Activated T-helper 2 cell treated with anti-CD3 and anti-CD28 coated beads, Interferon-gamma antibody, Interleukin-2, Interleukin-4, amounts not matched to agents 10 μg/mL and 5 μg/mL and 100 μg/mL, durations not matched to agents 14 hours and 24 hours and 36 hours (primary cell): ENCODE measurements at regions of chr6 and their contacts with region 1.

Region 1: DNA sequence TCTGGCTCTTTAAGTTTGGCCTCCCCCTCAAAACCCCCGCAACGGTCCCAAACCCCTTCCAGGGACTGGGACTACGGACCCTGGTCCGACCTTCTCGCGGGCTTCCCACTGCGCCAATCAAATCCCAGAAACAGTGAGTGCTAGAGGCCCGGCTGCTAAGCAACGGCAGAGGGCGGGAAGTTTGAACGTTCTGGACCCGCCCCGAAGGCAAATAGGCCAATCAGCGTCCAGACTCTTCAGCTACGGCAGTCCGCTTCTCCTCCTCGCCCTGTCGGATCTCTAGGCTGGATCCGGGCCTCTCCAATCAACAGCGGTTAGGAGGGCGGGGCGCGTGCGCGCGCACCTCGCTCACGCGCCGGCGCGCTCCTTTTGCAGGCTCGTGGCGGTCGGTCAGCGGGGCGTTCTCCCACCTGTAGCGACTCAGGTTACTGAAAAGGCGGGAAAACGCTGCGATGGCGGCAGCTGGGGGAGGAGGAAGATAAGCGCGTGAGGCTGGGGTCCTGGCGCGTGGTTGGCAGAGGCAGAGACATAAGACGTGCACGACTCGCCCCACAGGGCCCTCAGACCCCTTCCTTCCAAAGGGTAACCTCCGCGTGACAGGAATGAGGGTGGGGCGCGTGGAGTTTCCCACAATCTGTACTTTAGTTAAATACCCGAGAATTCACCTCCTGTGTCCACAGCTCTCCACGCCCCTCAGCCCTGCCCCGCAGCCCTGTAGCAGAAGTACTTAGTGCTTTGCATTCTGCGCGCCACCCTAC is at the start of gene MSH5:
- DNase-seq: peak; percentile 97
- H3K4me3 Mint-ChIP-seq: peak within 1 kb of the TSS; percentile 95
- H3K27ac Mint-ChIP-seq: peak within 1 kb of the TSS; percentile 90
- H3K4me1 Mint-ChIP-seq: peaks cover 49% of the 10 kb centered on the region
- H3K27me3 Mint-ChIP-seq: no peaks in the 10 kb centered on the region
- total RNA-seq, gene MSH5: 82.8 and 93.3 TPM in 2 replicates

Region 2: GRCh38 chr6:31546962-31547726 is 192.7 kb before region 1 on chr6 and contains the start of gene NFKBIL1:
- intact Hi-C with region 1: loop called (anchors 1 kb)
- DNase-seq: peak; percentile 90
- H3K4me3 Mint-ChIP-seq: peak within 1 kb of the TSS; percentile 84
- H3K27ac Mint-ChIP-seq: peak within 1 kb of the TSS; percentile 78
- H3K4me1 Mint-ChIP-seq: peaks cover 28% of the 10 kb centered on the region
- H3K27me3 Mint-ChIP-seq: no peaks in the 10 kb centered on the region
- total RNA-seq, gene NFKBIL1: 15.7 and 17.6 TPM in 2 replicates

Region 3: GRCh38 chr6:31665501-31666336 is 74.1 kb before region 1 on chr6 and contains the start of gene CSNK2B:
- intact Hi-C with region 1: loop called (anchors 1 kb)
- DNase-seq: peak; percentile 98
- H3K4me3 Mint-ChIP-seq: peak within 1 kb of the TSS; percentile 96
- H3K27ac Mint-ChIP-seq: peak within 1 kb of the TSS; percentile 94
- H3K4me1 Mint-ChIP-seq: peaks cover 43% of the 10 kb centered on the region
- H3K27me3 Mint-ChIP-seq: no peaks in the 10 kb centered on the region
- total RNA-seq, gene CSNK2B: 266 and 279 TPM in 2 replicates

Region 4: GRCh38 chr6:31776989-31777666 is 37.3 kb after region 1 on chr6 and contains the start of gene VWA7:
- intact Hi-C with region 1: loop called (anchors 2 kb)
- DNase-seq: peak; percentile 70
- H3K4me3 Mint-ChIP-seq: peak within 1 kb of the TSS; percentile 31
- H3K27ac Mint-ChIP-seq: peak within 1 kb of the TSS; percentile 83
- H3K4me1 Mint-ChIP-seq: peaks cover 23% of the 10 kb centered on the region
- H3K27me3 Mint-ChIP-seq: no peaks in the 10 kb centered on the region
- total RNA-seq, gene VWA7: 5.6 and 5.9 TPM in 2 replicates

Region 5: DNA sequence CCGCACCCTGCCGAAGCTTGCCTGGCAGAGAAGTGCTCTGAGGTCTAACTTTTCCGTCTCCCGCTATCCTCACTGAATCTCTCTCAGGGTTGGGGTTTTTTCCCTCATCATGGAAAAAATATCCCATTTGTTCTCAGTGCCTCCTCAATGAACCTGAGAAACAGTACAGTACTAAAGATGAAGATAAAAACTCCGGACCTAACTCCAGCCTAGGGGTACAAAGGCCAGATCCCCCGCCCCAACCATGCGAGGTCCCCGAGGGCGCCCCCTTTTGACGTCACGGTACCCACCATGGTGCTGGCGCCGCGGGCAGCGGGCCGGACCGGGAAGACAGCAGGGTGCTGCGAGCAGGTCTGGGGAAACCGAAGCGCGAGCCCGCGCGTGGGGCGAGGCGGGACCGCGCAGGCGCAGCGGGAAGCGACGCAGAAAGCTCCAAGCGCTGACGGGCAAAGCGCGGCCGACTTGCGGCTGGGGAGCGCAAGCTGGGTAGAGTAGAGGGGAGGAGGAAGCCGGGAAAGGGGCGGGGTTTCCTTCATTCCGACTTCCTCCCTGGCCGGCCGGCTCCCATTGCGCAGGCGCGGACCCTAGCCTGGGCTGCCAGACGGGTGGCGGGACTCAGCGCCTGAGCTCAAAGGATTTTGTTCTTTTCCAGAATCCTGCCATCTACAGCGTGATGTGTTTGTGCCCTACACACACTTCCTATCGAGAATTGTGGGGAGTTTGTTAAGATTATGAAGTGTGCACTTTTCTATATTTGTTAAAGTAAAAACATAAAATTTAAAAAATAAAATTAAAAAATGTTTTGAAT is 66.9 kb after region 1 on chr6 and contains the start of gene LSM2:
- intact Hi-C with region 1: loop called (anchors 1 kb)
- DNase-seq: peak; percentile 97
- H3K4me3 Mint-ChIP-seq: peak within 1 kb of the TSS; percentile 98
- H3K27ac Mint-ChIP-seq: peak within 1 kb of the TSS; percentile 96
- H3K4me1 Mint-ChIP-seq: peaks cover 13% of the 10 kb centered on the region
- H3K27me3 Mint-ChIP-seq: no peaks in the 10 kb centered on the region
- total RNA-seq, gene LSM2: 130 TPM in 2 replicates